ENCODE measurements at regions of chr5 and their contacts with region 1.

Region 1: DNA sequence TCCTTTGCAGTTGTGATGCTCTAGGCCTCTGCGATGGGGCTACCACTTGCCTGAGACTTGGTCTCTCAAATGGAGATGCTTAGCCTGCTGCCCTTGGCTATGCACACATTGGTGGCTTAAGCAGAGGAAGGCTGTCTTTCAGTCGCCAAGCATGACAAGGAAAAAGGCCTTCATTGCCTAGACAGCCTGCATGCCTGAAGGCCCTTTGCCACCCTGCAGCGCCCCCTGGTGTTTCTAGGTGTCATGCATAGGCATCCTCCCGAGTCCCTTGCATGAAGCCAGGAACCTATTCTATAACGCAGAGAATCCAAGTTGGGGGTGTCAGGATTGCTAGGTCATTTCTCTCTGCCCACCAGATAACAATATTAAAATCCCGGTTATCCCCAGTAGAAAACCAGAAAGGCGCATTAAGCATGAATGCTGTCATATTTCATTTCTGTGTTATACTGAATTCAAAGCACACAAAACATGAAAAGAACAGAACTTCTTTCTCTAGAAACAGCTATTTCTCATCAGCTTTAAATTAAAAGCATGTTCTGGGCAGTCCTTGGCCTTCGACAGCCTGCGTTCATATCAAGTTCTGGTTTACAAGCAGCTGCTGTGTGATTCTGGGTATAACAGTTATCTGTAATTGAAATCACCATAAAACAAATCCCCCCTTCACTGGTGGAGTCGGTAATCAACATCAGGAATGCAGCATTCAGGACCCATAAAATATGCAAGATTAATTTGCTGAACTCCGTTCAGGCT is 59.7 kb upstream of the TRPC7 start:
- DNase-seq: no peak
- ATAC-seq: peak; percentile 98
- H3K4me3 ChIP-seq: no peak overlapping the region
- H3K27ac ChIP-seq: no peak overlapping the region
- H3K4me1 ChIP-seq: no peaks in the 10 kb centered on the region
- H3K27me3 ChIP-seq: no peaks in the 10 kb centered on the region
- CTCF ChIP-seq: peak; percentile 77 to 86 (median 86)
- EP300 ChIP-seq: no peak
- POLR2A ChIP-seq: no peak
- RAD21 ChIP-seq: peak; percentile 75

Region 2: GRCh38 chr5:135271533-135272310 is 1153.3 kb before region 1 on chr5:
- CTCF ChIA-PET with region 1: no interaction called
- POLR2A ChIA-PET with region 1: no interaction called
- RAD21 ChIA-PET with region 1: no interaction called
- SMC1A ChIA-PET with region 1: no interaction called
- in situ Hi-C with region 1: no loop called
- intact Hi-C with region 1: no loop called
- DNase-seq: no peak
- ATAC-seq: peak; percentile 23; the same call in 2 of the 3 replicates
- H3K4me3 ChIP-seq: no peak overlapping the region
- H3K27ac ChIP-seq: no peak overlapping the region
- H3K4me1 ChIP-seq: no peaks in the 10 kb centered on the region
- H3K27me3 ChIP-seq: peaks cover 0 to 5% of the 10 kb centered on the region in 2 experiments; a peak in 2 of 4 replicates
- CTCF ChIP-seq: no peak
- EP300 ChIP-seq: no peak
- POLR2A ChIP-seq: no peak
- RAD21 ChIP-seq: no peak

Region 3: DNA sequence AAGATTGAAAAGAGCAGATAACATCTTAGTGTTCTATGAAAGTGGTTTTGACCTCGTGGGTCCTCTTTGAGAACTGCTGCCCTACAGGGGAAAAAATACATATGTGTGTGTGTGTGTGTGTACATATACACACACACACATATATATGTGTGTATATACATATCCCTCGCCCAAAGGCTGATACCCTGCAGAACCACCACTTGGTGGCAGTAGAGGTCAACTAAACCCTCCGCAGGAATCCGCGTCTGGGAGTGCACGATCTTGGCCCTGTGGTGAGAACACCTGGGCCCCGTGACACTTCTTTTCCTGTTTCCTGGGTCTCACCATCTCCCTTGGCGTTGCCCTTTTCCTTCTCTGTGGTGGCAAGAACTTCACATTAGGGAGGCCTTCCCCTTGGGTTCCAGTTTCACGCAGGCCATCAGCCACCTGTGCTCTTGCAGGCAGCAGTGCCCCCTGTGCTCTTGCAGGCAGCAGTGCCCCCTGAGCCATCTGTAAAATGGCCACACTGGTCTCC is 537.6 kb before region 1 on chr5:
- CTCF ChIA-PET with region 1: no interaction called
- POLR2A ChIA-PET with region 1: no interaction called
- RAD21 ChIA-PET with region 1: no interaction called
- SMC1A ChIA-PET with region 1: no interaction called
- in situ Hi-C with region 1: no loop called
- intact Hi-C with region 1: loop called (anchors 1 kb)
- DNase-seq: peak; percentile 25
- ATAC-seq: peak; percentile 98
- H3K4me3 ChIP-seq: no peak overlapping the region
- H3K27ac ChIP-seq: no peak overlapping the region
- H3K4me1 ChIP-seq: no peaks in the 10 kb centered on the region
- H3K27me3 ChIP-seq: no peaks in the 10 kb centered on the region
- CTCF ChIP-seq: peak; percentile 72 to 78 (median 74)
- EP300 ChIP-seq: no peak
- POLR2A ChIP-seq: no peak
- RAD21 ChIP-seq: peak; percentile 85

Region 4: DNA sequence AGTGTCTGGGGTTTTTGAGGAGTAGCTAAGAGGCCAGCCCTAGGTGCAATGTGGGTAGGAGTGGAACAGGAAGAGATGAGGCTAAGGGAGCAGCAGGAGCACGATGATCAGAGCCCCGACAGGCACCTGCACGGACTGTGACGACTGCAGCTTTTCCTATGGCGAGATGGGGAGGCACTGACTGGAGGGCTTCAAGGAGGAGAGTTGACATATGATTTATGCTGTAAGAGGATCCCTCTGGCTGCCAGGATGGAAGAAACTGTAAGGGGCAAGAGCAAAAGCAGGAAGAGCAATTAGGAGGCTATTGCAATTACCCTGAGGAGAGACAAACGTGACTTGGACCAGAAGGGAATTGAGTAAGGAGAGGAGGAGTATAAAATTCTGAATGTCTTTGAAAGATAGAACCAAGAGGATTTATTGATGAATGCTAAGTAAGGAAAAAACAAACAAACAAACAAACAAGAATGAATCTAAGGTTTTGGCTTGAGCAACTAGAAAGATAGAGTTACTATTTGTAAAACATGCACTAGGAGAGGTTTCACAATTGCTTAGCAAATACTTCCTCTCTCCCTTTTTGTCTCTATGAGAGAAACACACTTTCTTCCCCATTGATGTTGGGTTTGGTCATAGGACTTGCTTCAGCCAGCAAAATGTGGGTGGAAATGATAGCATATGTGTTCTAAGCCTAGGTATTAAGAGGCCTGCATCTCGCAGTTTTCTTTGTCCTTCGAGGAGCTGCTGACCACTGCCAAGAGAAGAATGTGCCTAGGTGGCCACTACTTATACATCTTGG is 92.6 kb before region 1 on chr5:
- CTCF ChIA-PET with region 1: no interaction called
- POLR2A ChIA-PET with region 1: no interaction called
- RAD21 ChIA-PET with region 1: no interaction called
- SMC1A ChIA-PET with region 1: no interaction called
- in situ Hi-C with region 1: no loop called
- intact Hi-C with region 1: no loop called
- DNase-seq: no peak
- ATAC-seq: no peak
- H3K4me3 ChIP-seq: no peak overlapping the region
- H3K27ac ChIP-seq: no peak overlapping the region
- H3K4me1 ChIP-seq: no peaks in the 10 kb centered on the region
- H3K27me3 ChIP-seq: peaks cover 0 to 1% of the 10 kb centered on the region in 2 experiments; a peak in 1 of 4 replicates
- CTCF ChIP-seq: no peak
- EP300 ChIP-seq: no peak
- POLR2A ChIP-seq: no peak
- RAD21 ChIP-seq: no peak

Region 5: DNA sequence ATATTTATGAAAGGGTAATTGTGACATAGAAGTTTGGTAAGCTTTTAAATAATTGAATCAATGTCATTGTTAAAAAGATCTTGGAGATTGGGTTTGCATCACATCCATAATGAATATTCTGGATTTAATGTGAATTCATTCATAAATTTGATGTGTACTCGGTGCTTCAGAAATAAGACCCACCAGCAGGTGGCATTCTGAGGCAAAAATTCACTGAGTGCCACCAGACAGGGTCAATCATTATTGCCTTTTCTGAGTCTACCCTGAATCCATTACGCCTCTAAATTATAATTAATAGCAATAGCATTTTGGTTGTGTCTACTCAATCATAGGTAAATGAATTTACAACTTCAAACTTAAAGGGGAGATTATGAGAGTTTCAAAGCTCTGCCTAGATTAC is 60.7 kb before region 1 on chr5:
- CTCF ChIA-PET with region 1: interaction called, 5 read pairs
- POLR2A ChIA-PET with region 1: no interaction called
- RAD21 ChIA-PET with region 1: no interaction called
- SMC1A ChIA-PET with region 1: no interaction called
- in situ Hi-C with region 1: no loop called
- intact Hi-C with region 1: loop called (anchors 1 kb)
- DNase-seq: no peak
- ATAC-seq: no peak
- H3K4me3 ChIP-seq: no peak overlapping the region
- H3K27ac ChIP-seq: no peak overlapping the region
- H3K4me1 ChIP-seq: no peaks in the 10 kb centered on the region
- H3K27me3 ChIP-seq: no peaks in the 10 kb centered on the region
- CTCF ChIP-seq: peak; percentile 30 to 39 (median 32); a peak in 5 of 6 replicates
- EP300 ChIP-seq: no peak
- POLR2A ChIP-seq: no peak
- RAD21 ChIP-seq: peak; percentile 22; the same call in 1 of the 2 replicates

Measured in GM12878 (cell line).